ENCODE measurements at regions of chr1 and their contacts with region 1.

Region 1: GRCh38 chr1:2561898-2562545 is 5.9 kb downstream of the TNFRSF14 start:
- DNase-seq: no peak
- ATAC-seq: peak; percentile 53
- H3K4me3 ChIP-seq: no peak overlapping the region
- H3K27ac ChIP-seq: no peak overlapping the region
- H3K4me1 ChIP-seq: peaks cover 4% of the 10 kb centered on the region; the same call in 1 of the 2 replicates
- H3K27me3 ChIP-seq: no peaks in the 10 kb centered on the region
- CTCF ChIP-seq: peak; percentile 41 to 70 (median 47)
- EP300 ChIP-seq: no peak
- POLR2A ChIP-seq: 0 out of 2 replicates have a peak, but pooled peaks have one; percentile 39
- RAD21 ChIP-seq: peak; percentile 25; the same call in 1 of the 2 replicates

Region 2: GRCh38 chr1:2537784-2538115 is 24.3 kb before region 1 on chr1:
- CTCF ChIA-PET with region 1: no interaction called
- POLR2A ChIA-PET with region 1: no interaction called
- RAD21 ChIA-PET with region 1: no interaction called
- SMC1A ChIA-PET with region 1: no interaction called
- in situ Hi-C with region 1: no loop called
- intact Hi-C with region 1: no loop called
- DNase-seq: no peak
- ATAC-seq: no peak
- H3K4me3 ChIP-seq: no peak overlapping the region
- H3K27ac ChIP-seq: no peak overlapping the region
- H3K4me1 ChIP-seq: peaks cover 7% of the 10 kb centered on the region; the same call in 1 of the 2 replicates
- H3K27me3 ChIP-seq: no peaks in the 10 kb centered on the region; a peak in 2 of 4 replicates
- CTCF ChIP-seq: no peak
- EP300 ChIP-seq: no peak
- POLR2A ChIP-seq: no peak
- RAD21 ChIP-seq: no peak

Region 3: DNA sequence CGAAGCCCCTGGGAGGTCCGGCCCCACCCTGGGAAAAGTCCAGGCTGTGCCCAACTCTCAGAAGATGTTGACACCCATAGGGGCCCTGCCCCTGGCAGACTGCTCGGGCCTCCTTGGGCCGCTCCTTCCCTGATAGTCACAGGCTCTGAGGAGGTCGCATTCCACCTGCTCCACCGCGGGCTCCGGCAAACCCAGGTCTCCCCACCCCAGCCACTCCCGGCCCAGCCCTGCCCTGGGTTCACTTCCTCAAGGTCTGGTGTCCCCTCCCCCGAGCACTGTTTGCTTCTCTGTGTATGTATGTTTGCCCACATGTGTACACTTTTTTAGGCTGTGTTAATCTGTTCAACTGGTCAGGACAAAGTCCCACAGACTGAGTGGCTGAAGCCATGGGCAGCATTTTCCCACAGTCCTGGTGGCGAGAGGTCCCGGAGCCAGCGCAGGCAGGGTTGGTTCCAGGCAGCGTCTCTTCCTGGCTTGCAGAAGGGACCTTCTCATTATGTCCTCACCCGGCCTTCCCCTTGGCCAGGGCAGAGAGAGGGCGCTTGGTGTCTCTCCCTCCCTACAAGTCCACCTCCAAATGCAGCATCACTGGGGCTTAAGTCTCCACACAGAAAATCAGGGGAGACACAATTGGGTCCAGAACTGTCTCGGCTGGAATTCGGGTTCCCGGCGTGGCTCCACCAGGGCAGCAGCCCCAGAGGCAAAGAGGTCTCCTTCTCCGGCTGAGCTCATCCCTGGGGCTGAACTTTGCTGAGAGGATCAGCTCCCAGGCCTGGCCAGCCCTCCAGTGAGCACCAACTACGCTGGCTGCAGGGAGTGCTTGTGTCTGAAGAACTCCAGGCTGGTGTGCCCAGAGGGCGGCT is 14.0 kb after region 1 on chr1:
- CTCF ChIA-PET with region 1: interaction called, 54 read pairs
- POLR2A ChIA-PET with region 1: interaction called, 60 read pairs
- RAD21 ChIA-PET with region 1: interaction called, 39 read pairs
- SMC1A ChIA-PET with region 1: interaction called, 28 read pairs
- in situ Hi-C with region 1: no loop called
- intact Hi-C with region 1: no loop called
- DNase-seq: no peak
- ATAC-seq: no peak; the same call in 2 of the 3 replicates
- H3K4me3 ChIP-seq: peak overlapping the region; percentile 59; the same call in 1 of the 2 replicates
- H3K27ac ChIP-seq: peak overlapping the region; percentile 99
- H3K4me1 ChIP-seq: peaks cover 46% of the 10 kb centered on the region
- H3K27me3 ChIP-seq: no peaks in the 10 kb centered on the region
- CTCF ChIP-seq: no peak
- EP300 ChIP-seq: no peak
- POLR2A ChIP-seq: no peak; the same call in 1 of the 2 replicates
- RAD21 ChIP-seq: no peak